Activated T-helper 2 cell treated with anti-CD3 and anti-CD28 coated beads, Interferon-gamma antibody, Interleukin-2, Interleukin-4, amounts not matched to agents 10 μg/mL and 5 μg/mL and 100 μg/mL, durations not matched to agents 14 hours and 24 hours and 36 hours (primary cell): ENCODE measurements at regions of chrX and their contacts with region 1.

Region 1: DNA sequence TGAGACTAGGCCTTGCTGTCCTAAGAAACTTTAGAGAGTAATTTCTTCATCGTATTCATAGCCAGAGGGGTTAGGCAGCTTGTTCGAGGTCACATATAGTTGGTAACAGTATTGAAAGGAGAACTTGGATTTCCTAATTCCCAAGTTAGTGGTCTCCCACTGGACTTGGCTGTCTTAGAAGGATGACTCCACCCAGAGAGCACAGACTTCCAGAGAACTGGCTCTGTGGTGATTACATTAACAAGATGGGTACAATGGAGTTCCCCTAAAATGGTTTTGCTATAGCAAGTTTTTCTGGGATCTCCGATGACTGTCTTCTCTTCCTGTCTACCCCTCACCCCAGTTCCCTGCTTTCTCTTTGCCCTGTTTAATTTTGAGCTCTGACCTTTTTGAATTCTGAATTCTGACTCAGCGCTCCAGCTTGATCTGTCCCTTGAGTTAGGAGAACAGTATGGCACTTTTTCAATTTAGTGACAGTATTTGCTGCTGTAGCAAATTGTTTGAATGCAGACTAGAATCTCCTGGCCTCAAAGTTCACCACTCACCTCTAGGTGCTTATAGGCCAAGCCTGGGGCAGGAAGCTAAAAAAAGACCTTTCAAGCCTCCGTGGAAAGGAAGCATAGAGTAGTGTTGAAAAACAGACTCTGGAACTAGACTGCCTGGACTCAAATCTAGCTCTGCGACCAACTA is 6.9 kb downstream of the MSN start:
- DNase-seq: no peak
- H3K4me3 Mint-ChIP-seq: peak overlapping the region; percentile 82
- H3K27ac Mint-ChIP-seq: peak overlapping the region; percentile 97
- H3K4me1 Mint-ChIP-seq: peaks cover 71% of the 10 kb centered on the region
- H3K27me3 Mint-ChIP-seq: no peaks in the 10 kb centered on the region

Region 2: GRCh38 chrX:65551489-65552339 is 122.6 kb before region 1 on chrX:
- intact Hi-C with region 1: no loop called
- DNase-seq: no peak
- H3K4me3 Mint-ChIP-seq: no peak overlapping the region
- H3K27ac Mint-ChIP-seq: no peak overlapping the region
- H3K4me1 Mint-ChIP-seq: no peaks in the 10 kb centered on the region
- H3K27me3 Mint-ChIP-seq: peaks cover 3% of the 10 kb centered on the region

Region 3: GRCh38 chrX:65688403-65688871 is 14.1 kb after region 1 on chrX:
- intact Hi-C with region 1: loop called (anchors 2 kb)
- DNase-seq: no peak
- H3K4me3 Mint-ChIP-seq: peak overlapping the region; percentile 26
- H3K27ac Mint-ChIP-seq: peak overlapping the region; percentile 68
- H3K4me1 Mint-ChIP-seq: peaks cover 65% of the 10 kb centered on the region
- H3K27me3 Mint-ChIP-seq: no peaks in the 10 kb centered on the region

Region 4: GRCh38 chrX:65697915-65698796 is 23.8 kb after region 1 on chrX:
- intact Hi-C with region 1: loop called (anchors 2 kb)
- DNase-seq: peak; percentile 64
- H3K4me3 Mint-ChIP-seq: peak overlapping the region; percentile 45
- H3K27ac Mint-ChIP-seq: peak overlapping the region; percentile 94
- H3K4me1 Mint-ChIP-seq: peaks cover 71% of the 10 kb centered on the region
- H3K27me3 Mint-ChIP-seq: no peaks in the 10 kb centered on the region